ENCODE measurements at regions of chr2 and their contacts with region 1.

Region 1: GRCh38 chr2:75199428-75200011 is at the start of gene TACR1:
- DNase-seq: peak; percentile 73
- ATAC-seq: peak; percentile 86
- H3K4me3 ChIP-seq: peak within 1 kb of the TSS; percentile 43
- H3K27ac ChIP-seq: no peak within 1 kb of the TSS
- H3K4me1 ChIP-seq: no peaks in the 10 kb centered on the region
- H3K27me3 ChIP-seq: peaks cover 35% of the 10 kb centered on the region
- CTCF ChIP-seq: peak; percentile 72
- POLR2A ChIP-seq: no peak
- RAD21 ChIP-seq: peak; percentile 77
- total RNA-seq, gene TACR1: under 0.01 TPM in 2 replicates

Region 2: GRCh38 chr2:75064691-75065396 is 134.7 kb before region 1 on chr2:
- CTCF ChIA-PET with region 1: interaction called, 9 read pairs
- POLR2A ChIA-PET with region 1: no interaction called
- dilution Hi-C with region 1: no loop called
- in situ Hi-C with region 1: no loop called
- intact Hi-C with region 1: loop called (anchors 1 kb)
- DNase-seq: peak; percentile 58
- ATAC-seq: peak; percentile 74
- H3K4me3 ChIP-seq: no peak overlapping the region; the same call in 1 of the 2 replicates
- H3K27ac ChIP-seq: no peak overlapping the region; the same call in 1 of the 2 replicates
- H3K4me1 ChIP-seq: peaks cover 4% of the 10 kb centered on the region; the same call in 1 of the 2 replicates
- H3K27me3 ChIP-seq: no peaks in the 10 kb centered on the region
- CTCF ChIP-seq: peak; percentile 82
- POLR2A ChIP-seq: no peak
- RAD21 ChIP-seq: peak; percentile 66

Region 3: DNA sequence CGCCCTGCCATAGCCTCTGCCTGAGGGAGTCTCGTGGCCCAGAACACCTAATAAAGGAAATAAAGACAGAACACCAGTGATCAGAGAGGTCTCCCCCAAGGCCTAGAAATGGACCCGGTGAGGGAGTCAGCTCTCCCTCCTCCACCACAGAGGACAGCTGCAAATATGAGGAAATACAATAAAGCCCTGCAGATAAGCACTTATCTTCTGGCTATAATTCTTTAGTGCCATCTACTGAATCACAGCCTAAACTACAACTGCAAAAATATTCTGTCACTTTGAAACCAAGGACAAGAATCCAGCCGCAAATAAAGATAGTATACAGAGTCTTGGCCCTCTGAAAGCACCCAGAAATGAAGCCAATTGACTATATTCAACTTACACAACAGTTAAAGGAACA is 42.2 kb after region 1 on chr2:
- CTCF ChIA-PET with region 1: interaction called, 11 read pairs
- POLR2A ChIA-PET with region 1: no interaction called
- dilution Hi-C with region 1: no loop called
- in situ Hi-C with region 1: no loop called
- intact Hi-C with region 1: no loop called
- DNase-seq: peak; percentile 43
- ATAC-seq: no peak
- H3K4me3 ChIP-seq: no peak overlapping the region
- H3K27ac ChIP-seq: no peak overlapping the region
- H3K4me1 ChIP-seq: peaks cover 12% of the 10 kb centered on the region
- H3K27me3 ChIP-seq: no peaks in the 10 kb centered on the region
- CTCF ChIP-seq: peak; percentile 45
- POLR2A ChIP-seq: no peak
- RAD21 ChIP-seq: peak; percentile 57

Region 4: DNA sequence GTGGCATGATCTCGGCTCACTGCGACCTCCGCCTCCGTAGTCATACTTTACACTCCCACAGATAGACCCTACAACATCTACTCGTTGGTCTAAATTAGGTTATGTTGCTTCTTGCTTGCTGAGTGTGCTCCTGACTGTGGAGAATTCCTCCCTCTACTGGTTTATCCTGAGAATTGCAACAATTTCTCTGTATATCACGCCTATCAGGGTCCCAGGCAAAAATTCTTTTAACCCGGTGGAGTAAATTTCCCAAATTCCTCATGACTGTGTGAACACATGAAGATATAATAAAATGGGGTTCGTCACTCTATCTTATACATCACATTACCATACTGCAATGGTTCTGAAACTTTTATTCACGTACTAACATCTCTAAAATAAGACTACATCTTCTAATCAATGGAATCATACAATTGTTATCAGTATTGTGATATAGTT is 204.5 kb after region 1 on chr2:
- CTCF ChIA-PET with region 1: interaction called, 14 read pairs
- POLR2A ChIA-PET with region 1: no interaction called
- dilution Hi-C with region 1: no loop called
- in situ Hi-C with region 1: loop called (anchors 5 kb)
- intact Hi-C with region 1: loop called (anchors 1 kb)
- DNase-seq: peak; percentile 59
- ATAC-seq: peak; percentile 94
- H3K4me3 ChIP-seq: no peak overlapping the region
- H3K27ac ChIP-seq: no peak overlapping the region
- H3K4me1 ChIP-seq: no peaks in the 10 kb centered on the region
- H3K27me3 ChIP-seq: peaks cover 14% of the 10 kb centered on the region
- CTCF ChIP-seq: peak; percentile 85
- POLR2A ChIP-seq: no peak
- RAD21 ChIP-seq: peak; percentile 93

Region 5: GRCh38 chr2:75627895-75628504 is 428.5 kb after region 1 on chr2:
- CTCF ChIA-PET with region 1: no interaction called
- POLR2A ChIA-PET with region 1: no interaction called
- dilution Hi-C with region 1: no loop called
- in situ Hi-C with region 1: loop called (anchors 25 kb)
- intact Hi-C with region 1: loop called (anchors 5 kb)
- DNase-seq: peak; percentile 80
- ATAC-seq: peak; percentile 97
- H3K4me3 ChIP-seq: no peak overlapping the region
- H3K27ac ChIP-seq: no peak overlapping the region
- H3K4me1 ChIP-seq: no peaks in the 10 kb centered on the region
- H3K27me3 ChIP-seq: peaks cover 18% of the 10 kb centered on the region
- CTCF ChIP-seq: peak; percentile 90
- POLR2A ChIP-seq: no peak
- RAD21 ChIP-seq: peak; percentile 93

Measured in IMR-90 (cell line).